PC-3 (cell line): ENCODE measurements at regions of chr21 and their contacts with region 1.

Region 1: DNA sequence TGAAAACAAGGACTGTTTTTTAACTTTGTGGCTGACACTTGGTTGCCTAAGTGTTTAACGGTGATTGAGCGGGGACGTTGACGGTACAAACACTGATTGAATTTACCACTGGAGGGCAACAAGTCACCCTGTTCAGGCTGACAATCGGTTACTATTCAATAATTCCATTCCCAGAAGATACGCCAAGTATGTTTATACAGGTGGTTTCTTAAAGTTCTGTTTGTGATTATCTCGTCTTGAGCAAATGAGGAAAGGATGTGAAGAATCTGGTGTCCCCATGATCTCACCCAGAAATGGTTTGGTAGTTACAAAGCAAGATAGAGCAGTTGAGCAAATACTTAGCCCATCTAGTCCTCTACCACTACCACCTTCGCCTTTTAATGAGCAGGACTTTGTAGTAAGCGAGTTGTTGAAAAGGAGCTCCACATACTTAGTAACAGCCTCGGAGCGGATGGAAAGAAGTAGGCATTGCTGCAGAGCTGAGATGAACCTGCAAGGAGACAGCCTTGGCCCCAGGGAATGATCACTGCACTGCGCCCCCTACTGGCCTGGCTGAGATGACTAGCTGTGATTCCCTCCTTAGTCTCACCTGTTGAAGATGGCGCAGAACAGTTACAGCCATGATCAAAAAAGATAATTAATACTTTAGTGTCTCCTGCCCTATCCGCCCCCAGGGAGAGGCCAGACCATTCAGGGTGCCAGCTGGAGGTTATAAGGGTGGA is 36.3 kb downstream of the IFNAR1 start:
- DNase-seq: peak; percentile 84
- ATAC-seq: peak; percentile 87
- H3K4me3 ChIP-seq: peak overlapping the region; percentile 32
- H3K27ac ChIP-seq: peak overlapping the region; percentile 68
- H3K4me1 ChIP-seq: peaks cover 23% of the 10 kb centered on the region
- H3K27me3 ChIP-seq: no peaks in the 10 kb centered on the region
- CTCF ChIP-seq: peak; percentile 87

Region 2: DNA sequence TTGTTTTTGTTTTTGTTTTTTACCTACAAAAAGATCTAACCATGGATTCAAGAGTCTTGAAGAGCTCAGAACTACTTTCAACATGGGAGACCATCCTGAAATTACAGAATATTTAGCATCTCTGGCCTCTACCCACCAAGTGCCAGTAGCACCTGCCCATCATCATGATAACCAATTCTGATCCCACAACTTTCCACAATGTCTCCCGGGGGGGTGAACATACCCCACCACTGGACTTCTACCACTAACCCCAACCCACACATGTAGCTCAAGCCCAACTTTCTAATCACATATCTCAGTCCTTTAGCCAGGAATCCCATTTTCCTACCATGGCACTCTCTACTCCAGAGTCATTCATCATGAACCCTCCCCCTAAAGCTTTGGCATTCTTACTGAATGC is 147.0 kb before region 1 on chr21:
- CTCF ChIA-PET with region 1: interaction called, 13 read pairs
- POLR2A ChIA-PET with region 1: no interaction called
- intact Hi-C with region 1: no loop called
- DNase-seq: no peak
- ATAC-seq: no peak
- H3K4me3 ChIP-seq: no peak overlapping the region
- H3K27ac ChIP-seq: no peak overlapping the region
- H3K4me1 ChIP-seq: no peaks in the 10 kb centered on the region
- H3K27me3 ChIP-seq: no peaks in the 10 kb centered on the region
- CTCF ChIP-seq: no peak

Region 3: GRCh38 chr21:33348706-33349105 is 12.3 kb before region 1 on chr21:
- CTCF ChIA-PET with region 1: interaction called, 5 read pairs
- POLR2A ChIA-PET with region 1: interaction called, 11 read pairs
- intact Hi-C with region 1: no loop called
- DNase-seq: no peak
- ATAC-seq: no peak
- H3K4me3 ChIP-seq: no peak overlapping the region
- H3K27ac ChIP-seq: no peak overlapping the region
- H3K4me1 ChIP-seq: no peaks in the 10 kb centered on the region
- H3K27me3 ChIP-seq: no peaks in the 10 kb centered on the region
- CTCF ChIP-seq: no peak

Region 4: GRCh38 chr21:33403779-33404585 is 42.9 kb after region 1 on chr21:
- CTCF ChIA-PET with region 1: no interaction called
- POLR2A ChIA-PET with region 1: no interaction called
- intact Hi-C with region 1: loop called (anchors 2 kb)
- DNase-seq: peak; percentile 41
- ATAC-seq: peak; percentile 55
- H3K4me3 ChIP-seq: peak overlapping the region; percentile 85
- H3K27ac ChIP-seq: peak overlapping the region; percentile 84
- H3K4me1 ChIP-seq: peaks cover 20% of the 10 kb centered on the region
- H3K27me3 ChIP-seq: no peaks in the 10 kb centered on the region
- CTCF ChIP-seq: no peak

Region 5: GRCh38 chr21:33441489-33442477 is 80.7 kb after region 1 on chr21:
- CTCF ChIA-PET with region 1: interaction called, 22 read pairs
- POLR2A ChIA-PET with region 1: interaction called, 13 read pairs
- intact Hi-C with region 1: loop called (anchors 1 kb)
- DNase-seq: peak; percentile 91
- ATAC-seq: peak; percentile 92
- H3K4me3 ChIP-seq: no peak overlapping the region
- H3K27ac ChIP-seq: peak overlapping the region; percentile 93
- H3K4me1 ChIP-seq: peaks cover 21% of the 10 kb centered on the region
- H3K27me3 ChIP-seq: no peaks in the 10 kb centered on the region
- CTCF ChIP-seq: no peak